GM12878 (cell line): ENCODE measurements at regions of chr11 and their contacts with region 1.

Region 1: DNA sequence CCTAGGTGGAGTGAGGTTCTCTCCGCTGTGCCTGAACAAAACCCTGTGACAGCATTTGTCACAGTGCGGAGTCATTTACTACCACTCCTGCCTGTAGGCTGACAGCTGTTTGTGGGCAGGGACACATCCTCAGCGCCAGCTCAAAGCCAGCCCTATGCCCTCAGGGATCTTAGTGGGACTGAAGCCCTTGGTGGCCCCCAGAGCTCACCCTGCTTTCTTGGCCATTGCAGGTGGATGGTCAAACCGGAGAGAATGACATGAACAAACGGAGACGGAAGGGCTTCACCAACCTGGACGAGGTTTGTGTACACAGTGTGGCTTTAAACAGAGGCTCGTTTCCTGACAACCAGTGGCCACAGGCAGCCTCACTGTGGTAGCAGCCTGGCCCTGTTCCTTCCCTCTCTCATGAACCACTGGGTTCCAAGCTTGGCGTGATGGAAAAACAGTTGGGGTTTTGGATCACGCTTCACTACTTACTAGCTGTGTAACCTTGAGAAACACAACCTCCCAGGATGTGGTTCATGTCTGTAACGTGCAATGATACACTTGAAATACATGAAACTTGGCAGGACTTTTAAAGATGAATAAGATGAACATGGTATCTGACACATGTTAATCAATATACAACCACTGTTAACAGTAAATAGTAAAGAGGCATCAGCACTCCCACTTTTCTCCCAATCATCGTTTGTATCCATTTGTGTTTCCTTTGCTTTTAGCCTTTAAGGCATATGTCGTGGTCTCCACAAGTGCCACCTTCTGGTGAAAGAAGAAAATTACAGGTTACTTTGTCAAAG is 125.8 kb downstream of the MICAL2 start:
- DNase-seq: peak; percentile 48
- ATAC-seq: peak; percentile 93
- H3K4me3 ChIP-seq: no peak overlapping the region
- H3K27ac ChIP-seq: 0 out of 2 replicates have a peak overlapping the region, but pooled peaks have one; percentile 1
- H3K4me1 ChIP-seq: peaks cover 7% of the 10 kb centered on the region
- H3K27me3 ChIP-seq: no peaks in the 10 kb centered on the region
- CTCF ChIP-seq: peak; percentile 52 to 72 (median 67)
- EP300 ChIP-seq: 0 out of 4 replicates have a peak, but pooled peaks of 1 of the 2 experiments have one; percentile 31
- POLR2A ChIP-seq: no peak
- RAD21 ChIP-seq: peak; percentile 82

Region 2: DNA sequence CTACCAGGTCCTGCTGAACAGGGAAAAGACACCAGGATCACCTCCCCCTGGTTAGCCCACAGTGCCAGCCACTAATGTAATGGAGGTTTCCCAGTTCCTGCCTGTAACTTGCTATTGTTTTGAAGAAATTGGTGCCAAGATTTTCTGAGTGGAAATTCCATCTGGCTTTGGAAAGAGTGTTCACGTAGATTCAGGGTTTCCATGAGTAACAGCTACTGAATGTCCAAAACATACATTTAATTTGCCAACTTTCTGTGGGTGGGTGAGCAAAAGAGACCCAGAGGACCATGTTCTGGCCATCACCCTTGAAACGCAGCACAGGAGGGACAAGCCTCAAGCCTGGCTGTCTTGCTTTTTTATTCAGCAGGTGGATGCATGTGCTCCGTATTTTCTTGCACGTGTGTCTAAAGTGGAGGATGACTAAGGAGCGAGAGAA is 218.9 kb before region 1 on chr11:
- CTCF ChIA-PET with region 1: no interaction called
- POLR2A ChIA-PET with region 1: no interaction called
- RAD21 ChIA-PET with region 1: no interaction called
- SMC1A ChIA-PET with region 1: no interaction called
- in situ Hi-C with region 1: no loop called
- intact Hi-C with region 1: no loop called
- DNase-seq: no peak
- ATAC-seq: no peak
- H3K4me3 ChIP-seq: no peak overlapping the region
- H3K27ac ChIP-seq: no peak overlapping the region
- H3K4me1 ChIP-seq: no peaks in the 10 kb centered on the region
- H3K27me3 ChIP-seq: no peaks in the 10 kb centered on the region
- CTCF ChIP-seq: no peak
- EP300 ChIP-seq: no peak
- POLR2A ChIP-seq: no peak
- RAD21 ChIP-seq: no peak

Region 3: DNA sequence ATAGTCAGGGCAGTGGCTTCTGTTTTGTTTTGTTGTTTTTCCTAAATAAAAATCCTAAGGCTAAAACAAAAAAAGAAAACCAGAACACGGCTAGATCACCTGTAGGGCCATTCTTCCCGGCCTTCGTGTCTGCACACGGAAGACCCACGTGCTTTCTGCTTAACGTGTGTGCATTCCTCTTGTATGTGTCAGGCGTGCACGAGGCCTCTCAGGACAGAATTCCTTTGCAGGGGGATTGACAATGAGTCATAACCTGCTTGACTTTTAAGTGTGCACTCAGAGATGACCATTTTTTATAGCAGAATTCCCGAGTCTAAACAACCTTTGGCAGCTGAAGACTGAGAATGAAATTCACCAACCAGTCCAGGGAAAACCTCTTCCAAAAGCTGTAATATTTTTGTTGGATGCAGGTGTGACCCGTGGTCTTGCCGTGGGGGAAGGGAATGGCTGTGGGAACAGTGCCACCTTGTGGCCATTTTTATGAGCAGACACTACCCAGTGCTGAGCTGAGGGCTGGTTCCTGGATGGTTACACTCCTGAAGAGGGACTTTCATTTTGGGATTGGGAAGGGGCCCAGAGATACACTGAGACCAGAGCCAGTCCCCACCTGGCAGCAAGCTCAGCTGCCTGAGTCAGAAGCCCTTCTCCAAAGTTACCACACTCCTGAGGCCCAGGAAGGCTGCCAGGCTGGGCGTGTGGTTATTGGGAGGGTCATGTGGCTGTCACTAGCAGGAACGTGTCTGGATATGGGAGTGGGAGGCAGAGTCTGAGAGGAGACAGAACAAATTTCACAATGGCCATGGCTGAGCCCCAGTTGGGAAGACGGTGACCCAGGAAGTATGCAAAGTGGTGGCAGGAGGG is 192.0 kb before region 1 on chr11:
- CTCF ChIA-PET with region 1: interaction called, 104 read pairs
- POLR2A ChIA-PET with region 1: no interaction called
- RAD21 ChIA-PET with region 1: interaction called, 19 read pairs
- SMC1A ChIA-PET with region 1: interaction called, 26 read pairs
- in situ Hi-C with region 1: loop called (anchors 5 kb)
- intact Hi-C with region 1: loop called (anchors 1 kb)
- DNase-seq: no peak
- ATAC-seq: peak; percentile 90
- H3K4me3 ChIP-seq: no peak overlapping the region
- H3K27ac ChIP-seq: no peak overlapping the region
- H3K4me1 ChIP-seq: no peaks in the 10 kb centered on the region
- H3K27me3 ChIP-seq: no peaks in the 10 kb centered on the region
- CTCF ChIP-seq: peak; percentile 72 to 92 (median 85)
- EP300 ChIP-seq: no peak
- POLR2A ChIP-seq: no peak
- RAD21 ChIP-seq: peak; percentile 88

Region 4: DNA sequence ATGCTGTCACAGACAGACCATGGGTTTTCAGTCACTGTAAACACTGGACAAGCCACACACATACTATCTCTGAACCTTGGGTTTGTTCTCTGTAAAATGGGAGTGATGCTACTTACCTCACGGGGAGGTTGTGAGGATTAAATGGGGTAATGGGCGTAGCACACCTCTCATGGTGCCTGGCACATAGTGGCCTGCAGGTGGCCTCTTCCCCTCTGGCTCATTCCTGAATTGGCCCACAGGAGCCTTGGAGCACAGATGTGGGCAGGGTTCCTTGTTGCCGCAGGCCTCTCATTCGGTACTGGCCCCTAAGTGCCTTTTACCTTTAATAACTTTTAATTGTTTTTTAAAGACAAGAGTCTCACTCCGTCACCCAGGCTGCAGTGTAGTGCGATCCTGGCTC is 114.1 kb before region 1 on chr11:
- CTCF ChIA-PET with region 1: interaction called, 23 read pairs
- POLR2A ChIA-PET with region 1: no interaction called
- RAD21 ChIA-PET with region 1: interaction called, 4 read pairs
- SMC1A ChIA-PET with region 1: interaction called, 19 read pairs
- in situ Hi-C with region 1: no loop called
- intact Hi-C with region 1: loop called (anchors 2 kb)
- DNase-seq: no peak
- ATAC-seq: peak; percentile 75
- H3K4me3 ChIP-seq: no peak overlapping the region
- H3K27ac ChIP-seq: no peak overlapping the region
- H3K4me1 ChIP-seq: no peaks in the 10 kb centered on the region; the same call in 1 of the 2 replicates
- H3K27me3 ChIP-seq: no peaks in the 10 kb centered on the region; a peak in 1 of 4 replicates
- CTCF ChIP-seq: peak; percentile 26 to 41 (median 35); a peak in 4 of 6 replicates
- EP300 ChIP-seq: no peak
- POLR2A ChIP-seq: no peak
- RAD21 ChIP-seq: peak; percentile 43; the same call in 1 of the 2 replicates

Region 5: DNA sequence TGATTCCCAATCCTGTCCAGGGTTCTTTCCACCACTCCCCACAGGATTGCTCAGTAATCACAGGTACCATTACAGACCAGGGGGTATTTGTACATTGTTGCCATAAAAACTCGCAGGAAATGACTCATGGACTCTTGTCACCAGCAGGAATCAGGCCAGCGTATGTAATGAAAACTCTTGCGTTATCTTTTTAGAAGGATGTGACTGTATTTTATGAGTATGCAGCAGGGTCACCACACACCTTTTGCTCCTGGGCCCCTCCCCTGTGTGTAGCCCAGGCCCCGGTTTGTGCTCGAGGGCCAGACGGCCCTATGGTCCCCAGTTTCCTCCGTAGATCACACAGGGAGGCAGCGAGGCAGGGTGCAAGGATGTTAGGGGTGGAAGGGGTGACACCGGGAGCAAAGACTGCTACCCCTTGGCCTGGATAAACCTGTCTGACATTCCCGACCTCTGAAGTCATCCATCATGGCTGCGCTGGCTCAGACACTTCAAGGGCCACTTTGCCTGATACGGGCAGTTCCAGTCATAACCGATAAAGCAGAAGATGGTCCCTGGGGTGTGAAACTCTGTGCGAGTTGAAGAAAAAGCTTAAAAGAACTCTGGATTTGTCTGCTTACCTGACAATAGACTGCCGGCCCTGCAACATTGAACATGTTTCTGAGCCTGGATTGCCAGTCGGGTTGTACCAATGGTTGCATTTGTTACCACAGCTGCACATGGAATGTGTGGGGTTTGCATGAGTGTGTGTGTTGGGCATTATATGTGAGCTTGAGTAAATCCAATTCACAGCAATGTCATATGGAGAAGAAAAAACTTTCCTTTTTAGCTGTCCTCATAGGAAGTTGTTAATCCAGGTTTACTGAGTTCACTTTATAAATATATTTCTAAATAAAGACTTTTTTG is 68.8 kb before region 1 on chr11:
- CTCF ChIA-PET with region 1: interaction called, 47 read pairs
- POLR2A ChIA-PET with region 1: no interaction called
- RAD21 ChIA-PET with region 1: interaction called, 22 read pairs
- SMC1A ChIA-PET with region 1: interaction called, 17 read pairs
- in situ Hi-C with region 1: no loop called
- intact Hi-C with region 1: loop called (anchors 1 kb)
- DNase-seq: no peak
- ATAC-seq: no peak
- H3K4me3 ChIP-seq: no peak overlapping the region
- H3K27ac ChIP-seq: no peak overlapping the region
- H3K4me1 ChIP-seq: no peaks in the 10 kb centered on the region
- H3K27me3 ChIP-seq: no peaks in the 10 kb centered on the region
- CTCF ChIP-seq: no peak
- EP300 ChIP-seq: no peak
- POLR2A ChIP-seq: no peak
- RAD21 ChIP-seq: no peak

Region 6: DNA sequence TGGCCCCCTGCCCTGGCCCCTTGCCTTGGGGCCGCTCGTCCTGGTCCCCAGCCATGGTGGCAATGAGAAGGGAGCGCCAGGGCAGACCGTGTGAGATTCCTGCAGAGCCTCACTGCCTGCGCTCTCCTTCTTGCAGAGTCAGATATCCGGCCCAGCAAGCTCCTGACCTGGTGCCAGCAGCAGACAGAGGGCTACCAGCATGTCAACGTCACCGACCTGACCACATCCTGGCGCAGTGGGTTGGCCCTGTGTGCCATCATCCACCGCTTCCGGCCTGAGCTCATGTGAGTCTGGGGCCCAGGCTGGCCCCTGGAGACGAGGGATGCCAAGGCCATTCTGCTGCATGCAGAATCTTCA is 11.6 kb before region 1 on chr11:
- CTCF ChIA-PET with region 1: interaction called, 35 read pairs
- POLR2A ChIA-PET with region 1: no interaction called
- RAD21 ChIA-PET with region 1: no interaction called
- SMC1A ChIA-PET with region 1: interaction called, 12 read pairs
- in situ Hi-C with region 1: no loop called
- intact Hi-C with region 1: no loop called
- DNase-seq: peak; percentile 65
- ATAC-seq: peak; percentile 97
- H3K4me3 ChIP-seq: no peak overlapping the region
- H3K27ac ChIP-seq: 0 out of 2 replicates have a peak overlapping the region, but pooled peaks have one; percentile 10
- H3K4me1 ChIP-seq: peaks cover 7% of the 10 kb centered on the region
- H3K27me3 ChIP-seq: no peaks in the 10 kb centered on the region
- CTCF ChIP-seq: no peak
- EP300 ChIP-seq: no peak
- POLR2A ChIP-seq: peak; percentile 36; the same call in 1 of the 2 replicates
- RAD21 ChIP-seq: no peak